CD4-positive, alpha-beta memory T cell (primary cell): ENCODE measurements at regions of chr1 and their contacts with region 1.

Region 1: DNA sequence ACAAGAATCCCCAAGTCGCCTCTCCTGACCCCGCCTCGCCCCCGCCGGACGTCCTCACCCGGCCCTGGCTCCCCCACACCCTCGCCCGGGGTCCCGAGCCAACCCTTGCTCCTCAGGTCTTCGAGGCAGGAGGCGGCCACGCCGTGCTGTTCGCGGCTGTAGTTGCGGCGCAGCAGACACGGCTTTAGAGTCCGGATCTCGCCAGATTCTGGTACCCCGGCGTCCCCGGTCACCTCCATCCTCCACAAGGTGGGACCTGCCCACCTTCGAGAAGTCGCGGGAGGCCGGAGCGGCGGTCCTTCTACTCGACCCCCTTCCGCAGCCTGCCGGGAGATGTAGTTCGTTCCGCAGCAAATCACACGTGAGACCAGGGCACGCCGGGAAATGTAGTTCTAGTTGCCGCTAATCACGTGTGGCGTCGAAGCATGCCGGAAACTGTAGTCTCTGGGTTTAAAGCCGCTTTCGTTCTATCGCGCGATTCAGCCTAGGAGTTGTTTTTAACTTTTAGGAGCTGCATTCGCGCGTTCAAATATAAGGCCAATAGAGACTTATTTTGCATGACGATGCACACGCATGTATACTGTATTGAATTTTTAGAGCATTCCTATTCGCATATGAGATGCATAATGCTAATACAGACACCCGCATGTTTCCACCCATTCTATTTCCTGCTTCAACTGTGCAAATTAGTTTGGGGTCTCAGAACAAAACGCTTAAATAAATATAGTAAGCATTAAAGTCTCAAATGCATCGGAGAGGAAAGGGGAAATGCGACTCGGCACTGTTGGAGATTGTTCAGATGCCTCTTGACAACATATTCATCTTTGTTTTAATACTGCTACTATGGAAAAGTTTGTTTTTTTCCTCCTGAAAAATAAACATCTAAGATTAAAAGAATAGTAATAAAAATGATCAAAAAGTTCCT is at the start of gene DFFA:
- DNase-seq: peak; percentile 86 to 96 (median 88)
- H3K4me3 ChIP-seq: peak within 1 kb of the TSS; percentile 64 to 84
- H3K4me3 Mint-ChIP-seq: peak within 1 kb of the TSS; percentile 91 to 95 (median 92)
- H3K27ac ChIP-seq: peak within 1 kb of the TSS; percentile 68
- H3K27ac Mint-ChIP-seq: peak within 1 kb of the TSS; percentile 83 to 94 (median 89)
- H3K4me1 ChIP-seq: peaks cover 50% of the 10 kb centered on the region
- H3K4me1 Mint-ChIP-seq: peaks cover 32 to 53% (median 43%) of the 10 kb centered on the region in 4 donors
- H3K27me3 ChIP-seq: no peaks in the 10 kb centered on the region
- H3K27me3 Mint-ChIP-seq: no peaks in the 10 kb centered on the region
- total RNA-seq, gene DFFA: 22.4 to 25.3 TPM

Region 2: GRCh38 chr1:9910425-9911178 is 561.9 kb before region 1 on chr1:
- CTCF ChIA-PET with region 1: no interaction called
- POLR2A ChIA-PET with region 1: no interaction called
- intact Hi-C with region 1: loop called (anchors 5 kb)
- DNase-seq: peak; percentile 100
- H3K4me3 ChIP-seq: peak overlapping the region; percentile 71 to 78
- H3K4me3 Mint-ChIP-seq: peak overlapping the region; percentile 92 to 99 (median 96)
- H3K27ac ChIP-seq: peak overlapping the region; percentile 64
- H3K27ac Mint-ChIP-seq: peak overlapping the region; percentile 85 to 99 (median 98)
- H3K4me1 ChIP-seq: peaks cover 16% of the 10 kb centered on the region
- H3K4me1 Mint-ChIP-seq: peaks cover 27 to 39% (median 34%) of the 10 kb centered on the region in 4 donors
- H3K27me3 ChIP-seq: no peaks in the 10 kb centered on the region
- H3K27me3 Mint-ChIP-seq: no peaks in the 10 kb centered on the region

Region 3: DNA sequence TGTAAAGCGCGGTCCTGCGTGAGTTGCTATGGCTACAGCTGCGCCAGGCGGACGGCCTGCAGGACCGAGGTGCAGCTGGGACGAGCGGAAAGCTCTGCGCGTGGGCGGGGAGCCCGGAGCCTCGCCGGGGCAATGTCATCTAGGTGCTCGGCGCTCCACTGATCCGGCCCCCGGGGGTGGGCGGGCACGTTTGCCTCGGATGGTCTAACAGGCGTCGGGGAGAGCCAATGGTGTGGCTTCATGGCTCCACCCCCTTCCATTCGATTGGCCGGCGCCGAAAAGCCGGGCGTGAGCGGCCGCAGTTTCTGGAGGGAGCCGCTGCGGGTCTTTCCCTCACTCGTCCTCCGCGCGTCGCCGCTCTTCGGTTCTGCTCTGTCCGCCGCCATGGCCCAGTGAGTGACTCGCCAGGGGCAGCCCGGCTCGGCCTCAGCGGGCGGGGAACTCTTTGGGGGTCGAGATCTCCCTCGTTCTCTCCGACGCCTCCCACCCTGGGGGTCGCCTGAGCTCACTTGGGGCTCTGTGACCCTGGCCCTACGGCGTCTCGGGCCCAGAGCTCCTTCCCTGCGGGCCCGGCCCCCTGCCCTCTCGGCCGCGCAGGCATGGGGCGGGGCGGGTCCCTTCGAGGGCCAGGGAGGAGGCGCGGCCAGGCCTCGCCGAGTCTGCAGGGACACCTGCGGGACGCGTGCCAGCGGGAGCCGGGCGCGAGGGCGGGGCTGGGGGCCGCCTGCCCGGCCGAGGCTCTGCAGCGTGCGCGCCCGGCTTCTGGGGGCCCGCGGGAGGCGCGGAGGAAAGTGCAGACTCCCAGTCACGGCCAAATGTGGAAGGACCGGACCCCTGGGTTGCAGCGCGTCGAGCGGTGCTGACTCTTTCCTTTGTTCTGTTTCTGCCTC is 73.5 kb before region 1 on chr1 and contains the start of gene PGD:
- CTCF ChIA-PET with region 1: no interaction called
- POLR2A ChIA-PET with region 1: interaction called, 3 read pairs
- intact Hi-C with region 1: loop called (anchors 1 kb)
- DNase-seq: peak; percentile 94 to 98 (median 95)
- H3K4me3 ChIP-seq: peak within 1 kb of the TSS; percentile 81 to 94
- H3K4me3 Mint-ChIP-seq: peak within 1 kb of the TSS; percentile 93 to 97 (median 95)
- H3K27ac ChIP-seq: peak within 1 kb of the TSS; percentile 76
- H3K27ac Mint-ChIP-seq: peak within 1 kb of the TSS; percentile 81 to 93 (median 86)
- H3K4me1 ChIP-seq: peaks cover 20% of the 10 kb centered on the region
- H3K4me1 Mint-ChIP-seq: peaks cover 8 to 24% (median 18%) of the 10 kb centered on the region in 4 donors
- H3K27me3 ChIP-seq: no peaks in the 10 kb centered on the region
- H3K27me3 Mint-ChIP-seq: no peaks in the 10 kb centered on the region
- total RNA-seq, gene PGD: 32.8 to 37.0 TPM